ENCODE measurements at regions of chr18 and their contacts with region 1.

Region 1: GRCh38 chr18:13216092-13216582 is 2.4 kb upstream of the LDLRAD4 start:
- DNase-seq: peak; percentile 66
- ATAC-seq: peak; percentile 78
- H3K4me3 ChIP-seq: peak overlapping the region in 2 of 3 experiments; percentile 64 to 83; a peak in 3 of 6 replicates
- H3K27ac ChIP-seq: no peak overlapping the region
- H3K4me1 ChIP-seq: peaks cover 59% of the 10 kb centered on the region
- H3K27me3 ChIP-seq: peaks cover 1 to 9% of the 10 kb centered on the region in 2 experiments; a peak in 3 of 5 replicates
- CTCF ChIP-seq: peak; percentile 91
- EP300 ChIP-seq: no peak
- POLR2A ChIP-seq: no peak
- RAD21 ChIP-seq: peak; percentile 78

Region 2: DNA sequence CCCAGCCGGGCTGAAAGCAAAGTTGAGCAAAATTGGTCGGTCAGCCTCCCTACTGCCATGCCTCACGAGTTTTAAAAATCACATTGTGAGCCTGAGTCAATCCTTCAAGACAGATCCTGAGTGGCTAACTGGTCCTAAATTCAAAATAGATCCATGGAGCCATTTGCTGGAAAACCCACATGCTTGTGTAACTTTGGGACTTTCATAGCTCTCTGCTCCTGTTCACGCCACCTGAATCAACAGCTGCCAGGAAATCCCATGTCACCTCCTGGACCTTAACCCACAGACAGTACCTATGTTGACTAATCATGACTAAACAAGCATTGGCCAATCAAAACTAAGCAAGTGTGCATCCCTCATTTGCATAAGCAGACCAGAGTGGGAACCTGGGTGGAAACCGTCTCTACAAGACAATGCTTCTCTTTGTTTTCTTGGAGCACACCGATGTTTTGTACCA is 40.4 kb before region 1 on chr18:
- CTCF ChIA-PET with region 1: no interaction called
- POLR2A ChIA-PET with region 1: interaction called, 10 read pairs
- in situ Hi-C with region 1: no loop called
- intact Hi-C with region 1: loop called (anchors 5 kb)
- DNase-seq: peak; percentile 94
- ATAC-seq: peak; percentile 87
- H3K4me3 ChIP-seq: no peak overlapping the region
- H3K27ac ChIP-seq: peak overlapping the region; percentile 96
- H3K4me1 ChIP-seq: peaks cover 74% of the 10 kb centered on the region
- H3K27me3 ChIP-seq: no peaks in the 10 kb centered on the region
- CTCF ChIP-seq: no peak
- EP300 ChIP-seq: peak; percentile 84 to 92
- POLR2A ChIP-seq: peak; percentile 57 to 58; a peak in 3 of 4 replicates
- RAD21 ChIP-seq: no peak

Region 3: DNA sequence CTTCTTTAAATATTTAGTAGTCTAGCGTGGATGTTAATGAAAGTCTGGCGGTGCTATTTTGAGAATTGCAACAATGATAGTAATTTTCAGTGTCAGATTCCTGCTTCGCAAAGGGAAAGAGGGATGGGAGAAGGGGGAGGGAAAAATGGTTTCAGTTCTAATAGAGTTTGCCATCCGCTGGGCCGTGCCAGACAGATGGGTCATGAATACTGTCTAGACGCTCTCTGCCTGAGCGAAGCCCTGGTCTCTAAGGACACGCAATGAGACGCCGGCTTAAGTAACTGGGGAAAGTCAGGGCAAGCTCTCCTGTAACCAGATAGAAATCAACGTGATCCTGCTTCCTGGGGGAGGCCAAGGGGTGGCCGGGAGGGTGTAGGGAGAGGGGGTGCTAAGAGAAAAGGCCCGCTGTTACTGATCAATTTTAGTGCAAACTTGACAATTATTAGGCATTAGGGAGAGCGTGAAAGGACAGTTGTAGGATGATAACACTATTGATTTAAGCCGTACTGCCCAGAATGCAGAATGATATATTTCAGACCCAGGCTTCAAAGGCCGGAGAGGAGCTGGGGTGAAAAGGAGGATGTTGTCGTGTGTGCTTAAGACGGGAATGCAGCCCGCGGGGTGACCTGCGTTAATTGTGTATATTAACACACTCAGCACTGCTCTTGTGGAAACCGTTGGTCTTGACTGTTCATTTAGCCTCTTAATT is 231.6 kb after region 1 on chr18:
- CTCF ChIA-PET with region 1: no interaction called
- POLR2A ChIA-PET with region 1: no interaction called
- in situ Hi-C with region 1: no loop called
- intact Hi-C with region 1: loop called (anchors 10 kb)
- DNase-seq: no peak
- ATAC-seq: no peak
- H3K4me3 ChIP-seq: no peak overlapping the region
- H3K27ac ChIP-seq: no peak overlapping the region
- H3K4me1 ChIP-seq: peaks cover 48% of the 10 kb centered on the region
- H3K27me3 ChIP-seq: no peaks in the 10 kb centered on the region
- CTCF ChIP-seq: no peak
- EP300 ChIP-seq: no peak
- POLR2A ChIP-seq: no peak
- RAD21 ChIP-seq: no peak

Region 4: GRCh38 chr18:13471971-13472628 is 256.0 kb after region 1 on chr18:
- CTCF ChIA-PET with region 1: no interaction called
- POLR2A ChIA-PET with region 1: no interaction called
- in situ Hi-C with region 1: no loop called
- intact Hi-C with region 1: loop called (anchors 1 kb)
- DNase-seq: peak; percentile 86
- ATAC-seq: peak; percentile 89
- H3K4me3 ChIP-seq: peak overlapping the region; percentile 10 to 65 (median 39); a peak in 5 of 6 replicates
- H3K27ac ChIP-seq: peak overlapping the region; percentile 64
- H3K4me1 ChIP-seq: peaks cover 58% of the 10 kb centered on the region
- H3K27me3 ChIP-seq: no peaks in the 10 kb centered on the region
- CTCF ChIP-seq: no peak
- EP300 ChIP-seq: peak in 1 of 2 experiments; percentile 18; a peak in 1 of 4 replicates
- POLR2A ChIP-seq: no peak; a peak in 1 of 4 replicates
- RAD21 ChIP-seq: no peak

Region 5: GRCh38 chr18:13530879-13531387 is 314.8 kb after region 1 on chr18:
- CTCF ChIA-PET with region 1: interaction called, 7 read pairs
- POLR2A ChIA-PET with region 1: no interaction called
- in situ Hi-C with region 1: loop called (anchors 10 kb)
- intact Hi-C with region 1: loop called (anchors 2 kb)
- DNase-seq: no peak
- ATAC-seq: peak; percentile 93
- H3K4me3 ChIP-seq: no peak overlapping the region
- H3K27ac ChIP-seq: no peak overlapping the region
- H3K4me1 ChIP-seq: peaks cover 32% of the 10 kb centered on the region
- H3K27me3 ChIP-seq: no peaks in the 10 kb centered on the region
- CTCF ChIP-seq: peak; percentile 70
- EP300 ChIP-seq: no peak
- POLR2A ChIP-seq: no peak
- RAD21 ChIP-seq: peak; percentile 56; the same call in 1 of the 2 replicates

Region 6: DNA sequence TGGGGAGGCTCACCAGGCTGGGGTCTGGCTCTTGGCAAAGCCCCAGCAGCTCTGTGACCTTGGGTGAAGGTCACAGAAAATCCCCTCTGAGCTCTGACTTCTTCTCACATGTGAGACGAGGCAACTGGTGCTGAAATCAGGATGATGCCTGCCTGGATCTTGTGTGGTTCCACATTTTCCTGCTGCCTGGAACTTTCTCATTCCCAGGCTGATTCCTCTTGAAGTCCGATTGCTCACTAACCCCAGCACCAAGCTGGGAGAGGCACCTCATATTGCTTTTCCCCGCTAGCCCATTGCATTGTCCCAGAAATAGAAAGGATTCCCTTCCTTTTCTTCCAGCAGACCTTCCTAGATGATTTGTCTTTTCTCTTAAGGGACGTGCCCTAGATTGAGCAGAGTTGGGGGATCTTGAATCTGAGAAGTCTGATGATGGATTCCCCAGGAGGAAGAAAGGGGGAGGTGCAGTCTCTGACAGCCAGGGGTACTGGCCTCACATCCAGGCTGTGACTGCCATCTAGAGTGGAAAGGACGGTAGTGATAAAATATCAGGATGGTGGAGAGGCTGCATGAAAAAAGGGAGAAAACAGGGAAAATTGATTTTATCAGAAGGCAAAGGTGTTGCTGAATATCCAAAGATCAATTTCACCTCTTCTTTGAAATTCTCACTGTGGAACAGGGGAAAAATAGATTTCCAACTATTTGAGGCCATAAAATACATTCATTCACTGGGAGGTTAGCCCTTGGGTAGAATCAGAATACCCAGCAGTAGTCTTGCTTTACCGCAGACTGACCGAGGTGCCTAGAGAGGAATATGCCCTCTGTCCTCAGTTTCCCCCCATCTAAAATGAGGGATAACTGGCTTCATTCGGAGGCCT is 413.9 kb after region 1 on chr18:
- CTCF ChIA-PET with region 1: no interaction called
- POLR2A ChIA-PET with region 1: no interaction called
- in situ Hi-C with region 1: loop called (anchors 25 kb)
- intact Hi-C with region 1: loop called (anchors 5 kb)
- DNase-seq: peak; percentile 67
- ATAC-seq: peak; percentile 95
- H3K4me3 ChIP-seq: no peak overlapping the region
- H3K27ac ChIP-seq: no peak overlapping the region
- H3K4me1 ChIP-seq: peaks cover 5% of the 10 kb centered on the region
- H3K27me3 ChIP-seq: no peaks in the 10 kb centered on the region
- CTCF ChIP-seq: peak; percentile 86
- EP300 ChIP-seq: no peak
- POLR2A ChIP-seq: no peak
- RAD21 ChIP-seq: peak; percentile 77

Region 7: DNA sequence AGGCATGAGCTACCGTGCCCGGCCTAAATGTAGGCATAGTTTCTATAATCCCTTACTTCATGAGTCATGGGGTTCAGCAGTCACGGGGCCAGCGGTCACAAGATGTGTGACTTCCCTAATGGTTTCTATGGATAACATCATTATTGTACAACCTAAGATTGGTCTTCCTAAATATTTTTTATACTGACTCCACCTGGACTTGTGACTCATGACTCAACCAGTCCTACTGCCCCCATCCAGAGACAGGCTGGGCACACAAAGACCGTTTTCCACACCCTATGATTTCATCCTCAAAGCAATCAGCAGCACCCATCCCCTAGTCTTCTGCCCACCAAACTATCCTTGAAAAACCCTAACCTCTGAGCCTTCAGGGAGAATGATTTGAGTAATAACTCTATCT is 494.3 kb after region 1 on chr18:
- CTCF ChIA-PET with region 1: no interaction called
- POLR2A ChIA-PET with region 1: no interaction called
- in situ Hi-C with region 1: no loop called
- intact Hi-C with region 1: loop called (anchors 10 kb)
- DNase-seq: no peak
- ATAC-seq: no peak
- H3K4me3 ChIP-seq: no peak overlapping the region
- H3K27ac ChIP-seq: no peak overlapping the region
- H3K4me1 ChIP-seq: peaks cover 33% of the 10 kb centered on the region
- H3K27me3 ChIP-seq: no peaks in the 10 kb centered on the region; a peak in 1 of 5 replicates
- CTCF ChIP-seq: no peak
- EP300 ChIP-seq: no peak
- POLR2A ChIP-seq: no peak
- RAD21 ChIP-seq: no peak

Region 8: GRCh38 chr18:14031053-14031452 is 814.9 kb after region 1 on chr18:
- CTCF ChIA-PET with region 1: no interaction called
- POLR2A ChIA-PET with region 1: no interaction called
- in situ Hi-C with region 1: no loop called
- intact Hi-C with region 1: no loop called
- DNase-seq: no peak
- ATAC-seq: no peak
- H3K4me3 ChIP-seq: no peak overlapping the region
- H3K27ac ChIP-seq: no peak overlapping the region
- H3K4me1 ChIP-seq: no peaks in the 10 kb centered on the region
- H3K27me3 ChIP-seq: peaks cover 0 to 10% of the 10 kb centered on the region in 2 experiments; a peak in 2 of 5 replicates
- CTCF ChIP-seq: no peak
- EP300 ChIP-seq: no peak
- POLR2A ChIP-seq: no peak
- RAD21 ChIP-seq: no peak